ENCODE measurements at regions of chr5 and their contacts with region 1.

Region 1: GRCh38 chr5:150449517-150450339 is at the start of gene RPS14:
- DNase-seq: peak; percentile 91 to 97 (median 96)
- H3K4me3 ChIP-seq: peak within 1 kb of the TSS; percentile 79
- H3K4me3 Mint-ChIP-seq: peak within 1 kb of the TSS; percentile 96 to 99 (median 99)
- H3K27ac ChIP-seq: peak within 1 kb of the TSS; percentile 98
- H3K27ac Mint-ChIP-seq: peak within 1 kb of the TSS; percentile 99 to 100 (median 100)
- H3K4me1 ChIP-seq: peaks cover 27% of the 10 kb centered on the region
- H3K4me1 Mint-ChIP-seq: peaks cover 32 to 45% (median 40%) of the 10 kb centered on the region in 3 donors
- H3K27me3 ChIP-seq: no peaks in the 10 kb centered on the region
- H3K27me3 Mint-ChIP-seq: no peaks in the 10 kb centered on the region
- total RNA-seq, gene RPS14: 2,924 to 3,007 TPM

Region 2: GRCh38 chr5:150409638-150410523 is 39.8 kb before region 1 on chr5:
- CTCF ChIA-PET with region 1: interaction called, 23 read pairs
- POLR2A ChIA-PET with region 1: interaction called, 37 read pairs
- DNase-seq: peak; percentile 26 to 73 (median 45)
- H3K4me3 ChIP-seq: peak overlapping the region; percentile 96
- H3K4me3 Mint-ChIP-seq: peak overlapping the region; percentile 96 to 99 (median 97)
- H3K27ac ChIP-seq: peak overlapping the region; percentile 96
- H3K27ac Mint-ChIP-seq: peak overlapping the region; percentile 98 to 100 (median 100)
- H3K4me1 ChIP-seq: peaks cover 46% of the 10 kb centered on the region
- H3K4me1 Mint-ChIP-seq: peaks cover 41 to 66% (median 46%) of the 10 kb centered on the region in 3 donors
- H3K27me3 ChIP-seq: no peaks in the 10 kb centered on the region
- H3K27me3 Mint-ChIP-seq: peaks cover 0 to 1% of the 10 kb centered on the region in 2 donors

Region 3: DNA sequence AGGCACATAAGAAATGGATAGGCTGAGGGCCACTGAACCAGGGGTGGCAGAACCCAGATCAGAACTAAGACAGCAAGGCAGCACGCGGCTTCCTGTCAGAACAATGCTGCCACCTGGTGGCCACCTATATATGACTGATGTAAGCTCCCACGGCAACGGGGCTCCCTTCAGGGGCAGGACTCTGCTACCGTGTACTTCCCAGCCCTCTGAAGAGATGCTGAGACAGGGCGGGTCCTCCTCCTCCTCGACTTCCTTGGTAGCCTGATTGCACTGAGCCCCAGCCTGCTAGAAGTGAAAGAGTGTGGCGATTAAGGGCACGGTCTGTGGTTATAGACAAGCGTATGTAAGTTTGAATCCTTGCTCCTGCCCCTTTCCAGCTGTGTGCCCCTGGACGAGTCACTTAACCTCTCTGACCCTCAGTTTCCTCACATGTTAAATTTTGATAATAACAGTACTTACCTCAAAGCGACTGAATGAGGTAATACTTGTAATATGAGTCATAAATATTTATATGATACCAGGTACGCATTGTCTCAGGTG is 13.5 kb before region 1 on chr5:
- CTCF ChIA-PET with region 1: interaction called, 11 read pairs
- POLR2A ChIA-PET with region 1: interaction called, 3 read pairs
- DNase-seq: peak; percentile 80 to 91 (median 85)
- H3K4me3 ChIP-seq: no peak overlapping the region
- H3K4me3 Mint-ChIP-seq: peak overlapping the region in 6 of 7 donors; percentile 39 to 76 (median 62)
- H3K27ac ChIP-seq: no peak overlapping the region
- H3K27ac Mint-ChIP-seq: peak overlapping the region; percentile 8 to 94 (median 76)
- H3K4me1 ChIP-seq: peaks cover 3% of the 10 kb centered on the region
- H3K4me1 Mint-ChIP-seq: peaks cover 7 to 10% (median 8%) of the 10 kb centered on the region in 3 donors
- H3K27me3 ChIP-seq: no peaks in the 10 kb centered on the region
- H3K27me3 Mint-ChIP-seq: peaks cover 0 to 2% of the 10 kb centered on the region in 2 donors

Measured in CD8-positive, alpha-beta memory T cell (primary cell).